PC-3 (cell line): ENCODE measurements at regions of chr1 and their contacts with region 1.

Region 1: DNA sequence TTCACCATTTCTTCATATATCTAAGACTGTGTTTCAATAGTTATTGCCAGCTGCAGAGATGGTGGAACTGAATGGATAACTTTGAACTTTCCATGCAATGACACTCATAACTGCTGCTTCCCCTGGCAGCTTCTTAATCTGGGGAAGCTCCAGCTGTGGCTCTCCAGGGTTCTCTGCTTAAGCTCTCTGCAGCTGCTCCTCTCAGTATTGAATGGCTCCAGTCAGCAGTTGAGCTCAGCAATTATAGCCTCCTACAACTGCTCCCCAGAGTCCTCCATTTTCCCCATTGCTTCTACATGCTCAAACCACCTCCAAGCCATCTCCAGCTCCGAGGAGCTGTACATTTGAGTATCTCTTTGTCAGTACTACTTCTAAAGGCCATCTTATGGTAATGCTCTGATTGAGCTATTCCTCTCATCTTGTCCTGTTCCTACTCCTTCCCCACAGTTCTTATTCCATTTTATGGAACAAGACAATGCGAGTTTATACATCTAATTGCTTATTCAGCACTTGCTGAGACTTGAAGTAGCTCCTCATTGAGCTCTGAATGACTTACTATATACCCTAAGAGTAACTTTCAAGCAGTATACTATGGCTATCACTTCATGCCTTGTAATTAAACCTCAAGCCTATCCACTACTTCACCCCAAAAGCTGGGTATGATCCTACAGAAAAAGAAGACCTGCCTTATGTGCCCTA is 362.4 kb downstream of the NEGR1 start:
- DNase-seq: no peak
- ATAC-seq: no peak
- H3K4me3 ChIP-seq: no peak overlapping the region
- H3K27ac ChIP-seq: no peak overlapping the region
- H3K4me1 ChIP-seq: peaks cover 6% of the 10 kb centered on the region; the same call in 1 of the 2 replicates
- H3K27me3 ChIP-seq: no peaks in the 10 kb centered on the region
- CTCF ChIP-seq: no peak

Region 2: GRCh38 chr1:71587961-71588360 is 332.0 kb before region 1 on chr1:
- CTCF ChIA-PET with region 1: no interaction called
- POLR2A ChIA-PET with region 1: no interaction called
- intact Hi-C with region 1: loop called (anchors 5 kb)
- DNase-seq: peak; percentile 47
- ATAC-seq: no peak; the same call in 1 of the 2 replicates
- H3K4me3 ChIP-seq: no peak overlapping the region
- H3K27ac ChIP-seq: no peak overlapping the region
- H3K4me1 ChIP-seq: peaks cover 14% of the 10 kb centered on the region
- H3K27me3 ChIP-seq: no peaks in the 10 kb centered on the region
- CTCF ChIP-seq: peak; percentile 60

Region 3: GRCh38 chr1:71780681-71781080 is 139.3 kb before region 1 on chr1:
- CTCF ChIA-PET with region 1: no interaction called
- POLR2A ChIA-PET with region 1: no interaction called
- intact Hi-C with region 1: no loop called
- DNase-seq: no peak
- ATAC-seq: no peak
- H3K4me3 ChIP-seq: no peak overlapping the region
- H3K27ac ChIP-seq: no peak overlapping the region
- H3K4me1 ChIP-seq: no peaks in the 10 kb centered on the region
- H3K27me3 ChIP-seq: no peaks in the 10 kb centered on the region
- CTCF ChIP-seq: no peak

Region 4: GRCh38 chr1:71850936-71851335 is 69.0 kb before region 1 on chr1:
- CTCF ChIA-PET with region 1: no interaction called
- POLR2A ChIA-PET with region 1: no interaction called
- intact Hi-C with region 1: loop called (anchors 5 kb)
- DNase-seq: no peak
- ATAC-seq: no peak
- H3K4me3 ChIP-seq: no peak overlapping the region
- H3K27ac ChIP-seq: no peak overlapping the region
- H3K4me1 ChIP-seq: no peaks in the 10 kb centered on the region
- H3K27me3 ChIP-seq: no peaks in the 10 kb centered on the region
- CTCF ChIP-seq: no peak

Region 5: DNA sequence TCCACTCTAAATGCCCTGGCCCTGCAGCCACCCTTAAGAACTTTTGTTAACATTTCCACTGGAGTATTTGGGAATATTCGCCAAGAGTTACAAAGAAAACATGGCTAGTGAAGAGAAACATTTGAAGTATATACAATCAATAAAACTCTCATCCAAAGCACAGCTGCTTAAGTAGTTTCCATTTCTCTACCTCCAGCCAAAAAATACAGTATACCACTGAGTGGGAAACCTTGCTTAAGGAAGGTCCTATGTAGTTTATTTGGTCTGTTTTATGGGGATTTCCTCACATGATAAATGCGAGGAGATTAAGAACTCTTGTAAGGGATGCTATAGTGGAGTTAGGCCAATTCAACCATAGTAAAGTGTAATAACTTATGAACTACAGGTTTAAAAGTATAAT is 20.1 kb before region 1 on chr1:
- CTCF ChIA-PET with region 1: no interaction called
- POLR2A ChIA-PET with region 1: no interaction called
- intact Hi-C with region 1: no loop called
- DNase-seq: no peak
- ATAC-seq: no peak
- H3K4me3 ChIP-seq: no peak overlapping the region
- H3K27ac ChIP-seq: no peak overlapping the region
- H3K4me1 ChIP-seq: no peaks in the 10 kb centered on the region
- H3K27me3 ChIP-seq: no peaks in the 10 kb centered on the region
- CTCF ChIP-seq: no peak

Region 6: DNA sequence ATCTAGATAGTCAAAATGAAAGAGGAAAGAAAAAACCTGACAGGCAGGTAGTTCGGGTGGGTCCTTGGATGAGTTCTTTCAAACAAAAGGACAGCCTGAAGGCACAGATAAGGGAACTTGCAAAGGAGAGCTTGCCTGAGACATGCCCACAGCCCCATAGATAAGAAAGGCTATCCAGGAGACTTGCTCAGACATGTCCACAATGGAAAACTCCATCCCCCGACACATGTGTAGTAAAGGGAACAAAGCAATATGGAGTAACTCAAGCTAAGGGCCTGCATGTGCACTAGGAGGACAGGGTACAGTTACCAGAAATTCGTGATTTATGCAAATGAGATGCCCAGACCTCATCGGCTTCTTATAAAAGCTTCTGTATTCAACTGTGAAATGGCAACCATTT is 80.8 kb after region 1 on chr1:
- CTCF ChIA-PET with region 1: no interaction called
- POLR2A ChIA-PET with region 1: interaction called, 12 read pairs
- intact Hi-C with region 1: no loop called
- DNase-seq: no peak
- ATAC-seq: no peak
- H3K4me3 ChIP-seq: no peak overlapping the region
- H3K27ac ChIP-seq: no peak overlapping the region
- H3K4me1 ChIP-seq: no peaks in the 10 kb centered on the region
- H3K27me3 ChIP-seq: no peaks in the 10 kb centered on the region
- CTCF ChIP-seq: no peak